ENCODE measurements at regions of chr19 and their contacts with region 1.

Region 1: DNA sequence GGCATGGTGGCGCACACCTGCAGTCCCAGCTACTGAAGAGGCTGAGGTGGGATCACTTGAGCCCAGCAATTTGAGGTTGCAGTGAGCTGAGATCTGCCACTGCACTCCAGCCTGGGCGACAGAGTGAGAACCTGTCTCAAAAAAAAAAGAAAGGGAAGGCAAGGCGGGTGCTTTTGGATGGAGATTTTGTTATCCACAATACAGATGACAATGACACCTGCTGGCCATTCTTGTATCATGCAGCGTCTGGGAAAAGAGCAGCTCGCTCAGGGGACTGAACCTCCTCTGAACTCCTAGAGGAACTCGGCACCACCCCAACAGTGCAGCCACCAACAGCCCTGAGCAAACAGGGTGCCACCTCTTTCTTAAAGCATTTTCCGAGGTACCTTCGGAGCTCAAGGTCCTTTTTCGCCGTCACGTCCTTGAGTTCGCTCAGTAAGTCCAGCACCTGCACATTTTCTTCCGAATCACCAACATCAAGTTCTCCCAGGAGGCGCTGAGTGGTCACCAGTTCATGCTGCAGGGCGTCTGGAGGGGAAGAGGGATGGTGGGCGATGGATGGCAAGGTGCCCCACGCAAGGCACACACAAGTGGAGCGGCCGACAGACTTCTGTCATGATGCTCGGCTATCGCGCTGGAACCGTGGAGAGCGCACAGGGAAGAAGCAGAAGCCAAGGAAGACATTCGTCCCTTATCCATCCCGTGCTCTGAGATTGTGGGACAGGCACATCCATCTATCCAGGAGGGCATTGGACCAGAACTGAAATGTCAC is 22.6 kb downstream of the HAUS8 start:
- DNase-seq: no peak
- ATAC-seq: no peak

Region 2: GRCh38 chr19:16771618-16772017 is 281.0 kb before region 1 on chr19:
- intact Hi-C with region 1: loop called (anchors 1 kb)
- DNase-seq: peak; percentile 84
- ATAC-seq: peak; percentile 73

Region 3: GRCh38 chr19:17097593-17098126 is 45.0 kb after region 1 on chr19:
- intact Hi-C with region 1: no loop called
- DNase-seq: no peak
- ATAC-seq: peak; percentile 58

Measured in Right ventricle myocardium inferior (tissue), 1 donor.